MCF 10A (cell line): ENCODE measurements at regions of chr13 and their contacts with region 1.

Region 1: GRCh38 chr13:40666045-40666904 is at the start of gene FOXO1:
- DNase-seq: peak; percentile 79
- H3K4me3 Mint-ChIP-seq: peak within 1 kb of the TSS; percentile 90
- H3K27ac Mint-ChIP-seq: peak within 1 kb of the TSS; percentile 79
- H3K4me1 Mint-ChIP-seq: peaks cover 12% of the 10 kb centered on the region
- H3K27me3 Mint-ChIP-seq: no peaks in the 10 kb centered on the region
- CTCF ChIP-seq: no peak
- total RNA-seq, gene FOXO1: 37.1 and 37.7 TPM in 2 replicates

Region 2: GRCh38 chr13:39942552-39943273 is 723.6 kb before region 1 on chr13:
- CTCF ChIA-PET with region 1: interaction called, 4 read pairs
- POLR2A ChIA-PET with region 1: interaction called, 7 read pairs
- intact Hi-C with region 1: loop called (anchors 1 kb)
- DNase-seq: peak; percentile 95
- H3K4me3 Mint-ChIP-seq: no peak overlapping the region
- H3K27ac Mint-ChIP-seq: peak overlapping the region; percentile 88
- H3K4me1 Mint-ChIP-seq: peaks cover 21% of the 10 kb centered on the region
- H3K27me3 Mint-ChIP-seq: no peaks in the 10 kb centered on the region
- CTCF ChIP-seq: peak; percentile 98

Region 3: GRCh38 chr13:40102856-40103255 is 563.4 kb before region 1 on chr13:
- CTCF ChIA-PET with region 1: no interaction called
- POLR2A ChIA-PET with region 1: interaction called, 3 read pairs
- intact Hi-C with region 1: loop called (anchors 2 kb)
- DNase-seq: peak; percentile 94
- H3K4me3 Mint-ChIP-seq: no peak overlapping the region
- H3K27ac Mint-ChIP-seq: peak overlapping the region; percentile 85
- H3K4me1 Mint-ChIP-seq: peaks cover 25% of the 10 kb centered on the region
- H3K27me3 Mint-ChIP-seq: no peaks in the 10 kb centered on the region
- CTCF ChIP-seq: no peak

Region 4: GRCh38 chr13:40233731-40234195 is 432.5 kb before region 1 on chr13:
- CTCF ChIA-PET with region 1: no interaction called
- POLR2A ChIA-PET with region 1: interaction called, 5 read pairs
- intact Hi-C with region 1: loop called (anchors 2 kb)
- DNase-seq: peak; percentile 24
- H3K4me3 Mint-ChIP-seq: no peak overlapping the region
- H3K27ac Mint-ChIP-seq: no peak overlapping the region
- H3K4me1 Mint-ChIP-seq: peaks cover 66% of the 10 kb centered on the region
- H3K27me3 Mint-ChIP-seq: no peaks in the 10 kb centered on the region
- CTCF ChIP-seq: no peak

Region 5: DNA sequence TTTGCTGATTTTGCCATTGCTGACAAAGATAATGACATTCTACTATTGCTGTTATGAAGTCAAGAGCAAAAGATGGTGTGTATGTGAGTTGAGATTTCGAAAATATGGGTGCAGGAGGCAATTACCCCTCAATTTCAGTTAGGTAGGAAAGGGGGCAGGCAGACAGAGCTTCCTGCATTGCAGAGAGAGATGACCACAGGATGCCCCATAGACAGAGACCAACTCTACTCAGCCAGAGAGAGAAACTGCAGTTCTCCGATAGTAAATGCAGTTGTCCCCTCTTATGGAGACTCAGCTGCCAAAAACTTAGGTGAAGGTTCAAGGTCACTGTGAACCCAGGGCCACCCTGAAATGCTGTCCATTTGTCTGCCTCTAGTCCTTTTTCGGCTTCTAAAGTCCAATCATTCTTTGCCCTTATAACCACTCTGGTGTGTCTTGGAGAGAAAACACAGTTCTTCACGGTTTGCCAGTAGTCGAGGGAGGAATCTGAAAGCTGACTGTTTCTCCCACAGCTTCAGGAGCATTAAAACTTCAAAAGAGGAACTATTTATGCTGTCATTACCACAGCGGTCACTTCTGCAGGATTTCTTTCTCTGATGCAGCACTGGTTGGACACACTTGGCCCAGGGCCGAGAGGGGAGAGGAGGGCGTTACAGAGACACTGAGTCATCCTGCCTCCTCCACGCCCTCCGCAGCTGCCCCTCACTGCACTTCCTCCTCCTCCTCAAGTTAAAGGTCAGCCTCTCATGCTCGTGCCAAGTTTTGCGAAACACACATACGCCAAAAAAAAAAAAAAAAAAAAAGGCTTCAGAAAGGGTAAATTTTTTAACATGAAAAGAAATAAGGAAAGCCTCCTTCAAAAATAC is 264.1 kb before region 1 on chr13:
- CTCF ChIA-PET with region 1: no interaction called
- POLR2A ChIA-PET with region 1: interaction called, 3 read pairs
- intact Hi-C with region 1: loop called (anchors 10 kb)
- DNase-seq: peak; percentile 98
- H3K4me3 Mint-ChIP-seq: peak overlapping the region; percentile 50
- H3K27ac Mint-ChIP-seq: peak overlapping the region; percentile 17
- H3K4me1 Mint-ChIP-seq: peaks cover 67% of the 10 kb centered on the region
- H3K27me3 Mint-ChIP-seq: no peaks in the 10 kb centered on the region
- CTCF ChIP-seq: no peak

Region 6: GRCh38 chr13:40490086-40490758 is 176.1 kb before region 1 on chr13:
- CTCF ChIA-PET with region 1: no interaction called
- POLR2A ChIA-PET with region 1: no interaction called
- intact Hi-C with region 1: no loop called
- DNase-seq: peak; percentile 47
- H3K4me3 Mint-ChIP-seq: no peak overlapping the region
- H3K27ac Mint-ChIP-seq: no peak overlapping the region
- H3K4me1 Mint-ChIP-seq: peaks cover 15% of the 10 kb centered on the region
- H3K27me3 Mint-ChIP-seq: no peaks in the 10 kb centered on the region
- CTCF ChIP-seq: no peak

Region 7: DNA sequence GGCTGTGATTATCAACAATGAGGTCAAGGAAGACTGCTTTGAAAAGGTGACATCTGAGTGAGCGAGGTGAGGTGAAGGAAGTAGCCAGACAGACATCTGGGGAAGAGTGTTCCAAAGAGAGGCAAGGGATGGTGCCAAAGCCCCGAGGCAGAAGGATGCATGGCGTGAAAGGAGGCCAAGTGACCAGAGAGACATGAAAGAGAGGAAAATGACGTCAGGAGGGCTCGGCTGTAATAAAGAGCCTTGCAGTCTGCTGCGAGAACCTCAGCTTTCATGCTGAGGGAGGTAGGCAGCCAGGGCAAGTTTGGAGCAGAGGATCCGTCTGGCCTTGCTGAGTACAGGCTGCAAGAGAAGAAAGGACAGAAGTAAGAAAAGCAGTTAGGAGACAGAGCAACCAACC is 50.7 kb before region 1 on chr13:
- CTCF ChIA-PET with region 1: no interaction called
- POLR2A ChIA-PET with region 1: interaction called, 4 read pairs
- intact Hi-C with region 1: loop called (anchors 5 kb)
- DNase-seq: peak; percentile 38
- H3K4me3 Mint-ChIP-seq: no peak overlapping the region
- H3K27ac Mint-ChIP-seq: no peak overlapping the region
- H3K4me1 Mint-ChIP-seq: peaks cover 57% of the 10 kb centered on the region
- H3K27me3 Mint-ChIP-seq: no peaks in the 10 kb centered on the region
- CTCF ChIP-seq: no peak